ENCODE measurements at regions of chr19 and their contacts with region 1.

Region 1: DNA sequence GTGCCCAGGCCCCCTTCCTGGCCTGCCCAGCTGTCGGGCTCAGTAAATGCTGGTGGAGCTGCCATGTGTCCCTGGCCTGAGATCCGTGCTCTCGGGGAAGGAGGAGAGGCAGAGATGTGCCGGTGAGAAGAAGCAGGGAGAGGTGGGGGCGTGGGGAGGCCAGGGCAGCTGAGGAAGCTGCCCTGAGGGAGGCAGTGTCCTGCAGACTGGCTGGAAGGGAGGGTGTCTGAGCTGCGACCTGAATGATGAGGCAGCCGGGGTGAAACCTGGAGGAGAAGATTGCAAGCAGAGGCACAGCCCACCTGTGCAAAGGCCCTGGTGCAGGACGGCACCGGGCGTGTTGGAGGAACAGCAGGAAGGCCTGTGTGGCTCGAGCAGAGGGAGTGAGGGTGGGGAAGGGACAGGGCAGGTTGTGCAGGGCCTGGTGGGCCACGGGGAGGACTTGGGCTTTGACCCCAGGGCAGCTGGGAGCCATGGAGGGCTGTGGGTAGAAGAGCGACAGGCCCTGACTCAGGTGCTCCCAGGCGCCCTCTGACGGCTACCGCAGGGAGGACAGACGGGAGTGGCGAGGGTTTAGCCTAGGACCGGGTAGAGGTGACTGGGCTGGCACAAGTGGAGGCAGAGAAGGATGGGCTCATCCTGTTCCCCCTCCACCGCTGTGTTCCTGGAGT is 14.0 kb upstream of the CELF5 start:
- DNase-seq: peak; percentile 33 to 61 (median 54)
- H3K4me3 ChIP-seq: no peak overlapping the region
- H3K4me3 Mint-ChIP-seq: no peak overlapping the region
- H3K27ac ChIP-seq: no peak overlapping the region
- H3K27ac Mint-ChIP-seq: peak overlapping the region in 1 of 7 donors; percentile 30
- H3K4me1 ChIP-seq: no peaks in the 10 kb centered on the region
- H3K4me1 Mint-ChIP-seq: no peaks in the 10 kb centered on the region
- H3K27me3 ChIP-seq: no peaks in the 10 kb centered on the region
- H3K27me3 Mint-ChIP-seq: peaks cover 0 to 2% (median 1%) of the 10 kb centered on the region in 3 donors
- CTCF ChIP-seq: peak; percentile 88

Region 2: GRCh38 chr19:2969104-2969504 is 241.4 kb before region 1 on chr19:
- intact Hi-C with region 1: loop called in 1 of 2 experiments (anchors 5 kb)
- DNase-seq: no peak
- H3K4me3 ChIP-seq: no peak overlapping the region
- H3K4me3 Mint-ChIP-seq: no peak overlapping the region
- H3K27ac ChIP-seq: no peak overlapping the region
- H3K27ac Mint-ChIP-seq: no peak overlapping the region
- H3K4me1 ChIP-seq: peaks cover 9 to 14% of the 10 kb centered on the region in 2 donors
- H3K4me1 Mint-ChIP-seq: peaks cover 10% of the 10 kb centered on the region
- H3K27me3 ChIP-seq: peaks cover 0 to 2% of the 10 kb centered on the region in 2 donors
- H3K27me3 Mint-ChIP-seq: peaks cover 12 to 20% (median 19%) of the 10 kb centered on the region in 3 donors
- CTCF ChIP-seq: no peak

Region 3: GRCh38 chr19:3075895-3076431 is 134.5 kb before region 1 on chr19:
- intact Hi-C with region 1: loop called in 1 of 2 experiments (anchors 2 kb)
- DNase-seq: peak; percentile 33 to 52 (median 34)
- H3K4me3 ChIP-seq: no peak overlapping the region
- H3K4me3 Mint-ChIP-seq: no peak overlapping the region
- H3K27ac ChIP-seq: no peak overlapping the region
- H3K27ac Mint-ChIP-seq: no peak overlapping the region
- H3K4me1 ChIP-seq: peaks cover 0 to 2% of the 10 kb centered on the region in 2 donors
- H3K4me1 Mint-ChIP-seq: peaks cover 6% of the 10 kb centered on the region
- H3K27me3 ChIP-seq: peaks cover 0 to 5% of the 10 kb centered on the region in 2 donors
- H3K27me3 Mint-ChIP-seq: peaks cover 6 to 25% (median 22%) of the 10 kb centered on the region in 3 donors
- CTCF ChIP-seq: peak; percentile 95

Region 4: DNA sequence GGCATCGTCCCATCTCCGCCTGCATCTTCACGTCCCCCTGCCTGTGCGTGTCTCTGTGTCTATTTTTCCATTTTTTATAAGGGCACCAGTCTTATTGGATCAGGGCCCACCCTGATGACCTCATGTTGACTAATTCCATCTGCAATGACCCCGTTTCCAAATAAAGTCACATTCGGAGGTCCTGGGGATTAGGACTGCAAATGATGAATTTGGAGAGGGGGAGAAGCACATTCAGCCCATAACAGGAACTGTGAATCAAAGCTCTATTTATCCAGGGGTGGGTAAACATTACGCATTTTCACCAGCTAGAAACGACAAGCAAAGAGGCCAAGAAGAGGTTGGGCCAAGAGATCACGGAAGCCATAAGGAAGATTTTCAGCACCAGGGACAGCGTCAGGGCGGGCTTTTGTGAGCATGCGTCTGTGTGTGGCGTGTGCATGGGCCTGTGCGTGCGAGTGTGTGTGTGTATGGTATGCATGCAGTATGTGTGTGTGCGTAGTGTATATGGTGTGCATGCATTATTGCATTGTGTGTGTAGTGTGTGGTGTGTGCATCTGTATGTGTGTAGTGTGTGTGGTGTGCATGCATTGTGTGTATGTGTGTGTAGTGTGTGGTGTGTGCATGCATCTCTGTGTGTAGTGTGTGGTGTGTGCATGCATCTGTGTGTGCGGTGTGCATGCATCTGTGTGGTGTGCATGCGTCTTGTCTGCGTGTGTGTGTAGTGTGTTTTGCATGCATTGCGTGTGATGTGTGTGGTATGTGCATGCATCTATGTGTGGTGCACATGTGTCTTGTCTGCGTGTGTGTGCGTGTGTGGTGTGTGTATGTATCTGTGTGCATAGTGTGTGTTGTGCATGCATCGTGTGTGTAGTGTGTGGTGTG is 33.6 kb after region 1 on chr19:
- intact Hi-C with region 1: no loop called
- DNase-seq: peak in 2 of 3 donors; percentile 6 to 21
- H3K4me3 ChIP-seq: no peak overlapping the region
- H3K4me3 Mint-ChIP-seq: no peak overlapping the region
- H3K27ac ChIP-seq: no peak overlapping the region
- H3K27ac Mint-ChIP-seq: no peak overlapping the region
- H3K4me1 ChIP-seq: no peaks in the 10 kb centered on the region
- H3K4me1 Mint-ChIP-seq: no peaks in the 10 kb centered on the region
- H3K27me3 ChIP-seq: no peaks in the 10 kb centered on the region
- H3K27me3 Mint-ChIP-seq: peaks cover 0 to 12% (median 9%) of the 10 kb centered on the region in 3 donors
- CTCF ChIP-seq: no peak

Measured in CD14-positive monocyte (primary cell).